Activated T-helper 2 cell treated with anti-CD3 and anti-CD28 coated beads, Interferon-gamma antibody, Interleukin-2, Interleukin-4, amounts not matched to agents 10 μg/mL and 5 μg/mL and 100 μg/mL, durations not matched to agents 14 hours and 24 hours and 36 hours (primary cell): ENCODE measurements at regions of chr19 and their contacts with region 1.

Region 1: GRCh38 chr19:2096480-2097329 is at the start of gene IZUMO4:
- DNase-seq: peak; percentile 98
- H3K4me3 Mint-ChIP-seq: peak within 1 kb of the TSS; percentile 97
- H3K27ac Mint-ChIP-seq: peak within 1 kb of the TSS; percentile 84
- H3K4me1 Mint-ChIP-seq: peaks cover 15% of the 10 kb centered on the region
- H3K27me3 Mint-ChIP-seq: no peaks in the 10 kb centered on the region
- total RNA-seq, gene IZUMO4: 7.6 and 9.5 TPM in 2 replicates

Region 2: DNA sequence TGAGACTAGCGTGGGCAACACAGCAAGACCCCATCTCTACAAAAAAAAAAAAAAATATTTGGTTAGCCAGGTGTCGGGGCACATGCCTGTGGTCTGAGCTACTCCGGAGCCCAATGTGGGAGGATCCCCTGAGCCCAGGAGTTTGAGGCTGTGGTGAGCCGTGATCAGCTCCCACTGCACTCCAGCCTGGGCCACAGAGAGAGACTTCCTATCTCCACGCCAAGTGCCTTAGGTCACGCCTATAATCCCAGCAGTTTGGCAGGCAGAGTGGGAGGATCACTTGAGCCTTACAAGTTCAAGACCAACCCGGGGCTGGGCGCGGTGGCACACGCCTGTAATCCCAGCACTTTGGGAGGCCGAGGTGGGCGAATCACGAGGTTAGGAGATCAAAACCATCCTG is 200.2 kb before region 1 on chr19:
- intact Hi-C with region 1: loop called (anchors 5 kb)
- DNase-seq: no peak
- H3K4me3 Mint-ChIP-seq: peak overlapping the region; percentile 47
- H3K27ac Mint-ChIP-seq: peak overlapping the region; percentile 96
- H3K4me1 Mint-ChIP-seq: peaks cover 14% of the 10 kb centered on the region
- H3K27me3 Mint-ChIP-seq: no peaks in the 10 kb centered on the region

Region 3: DNA sequence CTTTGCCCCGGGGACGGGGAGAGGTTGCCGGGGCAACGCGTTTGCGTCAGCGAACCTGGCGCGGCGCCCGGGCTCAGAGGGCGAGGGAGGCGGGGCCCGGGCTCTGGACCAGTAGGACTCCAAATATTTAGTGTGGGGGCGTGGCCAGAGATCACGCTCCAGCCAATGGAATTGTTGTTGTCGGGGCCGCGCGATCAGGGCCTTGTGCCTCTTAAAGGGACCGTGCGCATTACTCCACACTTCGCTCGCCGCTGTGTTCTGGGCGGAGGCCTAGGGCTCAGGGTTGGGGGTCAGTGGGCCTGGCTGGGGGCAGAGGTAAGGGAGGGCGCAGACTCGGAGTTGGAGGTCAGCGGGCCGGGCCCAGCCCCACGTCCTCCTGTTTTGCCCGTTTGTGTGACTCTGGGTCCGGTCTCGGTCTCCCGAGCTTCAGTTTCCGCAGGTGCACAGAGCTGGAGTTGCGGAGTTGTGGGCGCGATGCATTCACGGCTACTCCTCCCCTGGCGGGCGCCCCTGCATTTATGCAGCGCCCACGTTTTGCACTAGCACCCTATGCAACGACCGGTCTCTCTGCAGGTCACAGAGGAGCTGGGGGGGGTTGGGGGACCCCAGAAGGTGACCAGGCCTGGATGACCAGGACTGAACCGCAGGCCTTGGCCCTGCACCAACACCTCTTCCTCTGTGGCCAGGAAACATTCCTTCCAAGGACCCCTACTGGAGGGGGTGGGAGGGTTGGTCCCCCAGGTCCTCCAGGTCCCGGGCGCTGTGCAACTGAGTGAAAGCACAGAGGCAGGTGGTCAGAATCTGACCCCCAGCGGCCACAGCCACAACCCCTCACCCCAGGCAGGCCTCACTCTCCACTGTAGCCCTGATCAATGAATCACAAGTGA is 35.0 kb before region 1 on chr19:
- intact Hi-C with region 1: loop called (anchors 5 kb)
- DNase-seq: peak; percentile 98
- H3K4me3 Mint-ChIP-seq: peak overlapping the region; percentile 87
- H3K27ac Mint-ChIP-seq: peak overlapping the region; percentile 86
- H3K4me1 Mint-ChIP-seq: peaks cover 21% of the 10 kb centered on the region
- H3K27me3 Mint-ChIP-seq: no peaks in the 10 kb centered on the region

Region 4: DNA sequence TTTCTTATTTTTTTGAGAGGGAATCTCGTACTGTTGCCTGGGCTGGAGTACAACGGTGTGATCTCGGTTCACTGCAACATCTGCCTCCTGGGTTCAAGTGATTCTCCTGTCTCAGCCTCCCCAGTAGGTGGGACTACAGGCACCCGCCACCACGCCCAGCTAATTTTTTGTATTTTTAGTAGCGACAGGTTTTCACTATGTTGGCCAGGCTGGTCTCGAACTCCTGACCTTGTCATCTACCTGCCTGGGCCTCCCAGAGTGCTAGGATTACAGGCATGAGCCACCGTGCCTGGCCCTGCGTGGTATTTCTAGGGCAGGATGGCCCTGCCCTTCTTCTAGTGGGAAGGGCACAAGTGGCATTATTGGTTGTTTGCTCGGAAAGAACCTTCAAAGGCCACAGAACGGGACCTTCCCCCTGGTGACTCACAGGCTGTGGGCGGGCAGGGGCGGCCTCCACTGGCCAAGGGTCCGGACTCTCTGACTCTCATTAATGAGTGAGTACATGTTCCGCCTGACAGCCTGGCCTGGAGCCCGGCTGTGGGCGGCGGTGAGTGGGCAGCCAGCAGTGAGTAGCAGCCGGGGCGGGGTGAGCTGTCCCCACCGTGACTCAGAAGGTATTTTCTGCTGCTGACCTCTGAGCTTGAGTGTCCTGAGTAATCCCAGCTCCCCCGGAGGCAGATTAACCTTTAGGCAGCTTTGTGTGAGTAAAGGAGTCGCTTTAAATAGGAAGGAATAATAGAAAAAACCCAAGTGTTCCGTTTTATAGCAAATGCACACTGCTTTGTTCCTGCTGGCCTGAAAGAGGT is 72.1 kb after region 1 on chr19:
- intact Hi-C with region 1: loop called (anchors 5 kb)
- DNase-seq: peak; percentile 33
- H3K4me3 Mint-ChIP-seq: peak overlapping the region; percentile 77
- H3K27ac Mint-ChIP-seq: peak overlapping the region; percentile 95
- H3K4me1 Mint-ChIP-seq: peaks cover 52% of the 10 kb centered on the region
- H3K27me3 Mint-ChIP-seq: no peaks in the 10 kb centered on the region